CD8-positive, alpha-beta T cell (primary cell): ENCODE measurements at regions of chr19 and their contacts with region 1.

Region 1: DNA sequence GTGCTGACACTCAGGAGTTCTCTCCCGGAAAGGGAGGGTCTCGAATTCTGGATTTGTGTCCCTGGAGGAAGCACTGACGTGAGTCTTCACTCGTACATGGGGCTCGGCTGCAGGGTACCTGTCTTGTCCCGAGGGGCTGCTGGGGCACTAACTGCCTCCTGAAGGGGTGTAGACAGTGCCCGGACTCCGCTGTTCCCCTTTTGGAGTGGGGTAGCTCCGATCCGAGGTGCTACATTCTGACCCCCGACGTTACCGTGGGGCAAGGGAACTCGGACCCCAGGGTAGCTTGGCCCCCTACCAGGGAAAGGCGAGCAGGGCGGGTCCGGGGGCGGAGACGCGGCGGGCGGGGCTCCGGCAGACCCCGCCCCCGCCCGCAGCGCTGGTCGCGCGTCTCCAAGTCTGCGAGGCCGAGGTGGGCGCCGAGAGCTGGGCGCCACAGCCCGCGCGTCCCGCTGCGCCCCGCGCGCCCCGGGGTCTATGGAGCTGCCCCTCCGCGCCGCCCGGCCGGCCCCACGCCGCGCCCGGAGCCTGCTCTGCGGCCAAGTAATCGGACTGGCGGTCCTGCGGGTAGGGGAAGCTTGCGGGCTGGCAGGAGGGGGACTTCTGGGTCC is at the start of gene NPAS1:
- DNase-seq: peak in 1 of 9 experiments; percentile 10
- ATAC-seq: no peak
- H3K4me3 ChIP-seq: no peak within 1 kb of the TSS
- H3K4me3 Mint-ChIP-seq: peak within 1 kb of the TSS; percentile 26
- H3K27ac ChIP-seq: no peak within 1 kb of the TSS
- H3K27ac Mint-ChIP-seq: no peak within 1 kb of the TSS
- H3K4me1 ChIP-seq: peaks cover 26% of the 10 kb centered on the region
- H3K4me1 Mint-ChIP-seq: peaks cover 17% of the 10 kb centered on the region
- H3K27me3 ChIP-seq: peaks cover 26 to 32% of the 10 kb centered on the region in 2 experiments
- H3K27me3 Mint-ChIP-seq: peaks cover 33% of the 10 kb centered on the region
- CTCF ChIP-seq: no peak
- total RNA-seq, gene NPAS1: 1.1 to 1.6 TPM

Region 2: GRCh38 chr19:46600384-46601317 is 418.9 kb before region 1 on chr19:
- CTCF ChIA-PET with region 1: no interaction called
- POLR2A ChIA-PET with region 1: no interaction called
- intact Hi-C with region 1: no loop called
- DNase-seq: peak; percentile 95 to 99 (median 97)
- ATAC-seq: peak; percentile 89
- H3K4me3 ChIP-seq: peak overlapping the region; percentile 88 to 99
- H3K4me3 Mint-ChIP-seq: peak overlapping the region; percentile 96
- H3K27ac ChIP-seq: peak overlapping the region; percentile 100
- H3K27ac Mint-ChIP-seq: peak overlapping the region; percentile 100
- H3K4me1 ChIP-seq: peaks cover 34% of the 10 kb centered on the region
- H3K4me1 Mint-ChIP-seq: peaks cover 38% of the 10 kb centered on the region
- H3K27me3 ChIP-seq: no peaks in the 10 kb centered on the region
- H3K27me3 Mint-ChIP-seq: no peaks in the 10 kb centered on the region
- CTCF ChIP-seq: no peak

Region 3: DNA sequence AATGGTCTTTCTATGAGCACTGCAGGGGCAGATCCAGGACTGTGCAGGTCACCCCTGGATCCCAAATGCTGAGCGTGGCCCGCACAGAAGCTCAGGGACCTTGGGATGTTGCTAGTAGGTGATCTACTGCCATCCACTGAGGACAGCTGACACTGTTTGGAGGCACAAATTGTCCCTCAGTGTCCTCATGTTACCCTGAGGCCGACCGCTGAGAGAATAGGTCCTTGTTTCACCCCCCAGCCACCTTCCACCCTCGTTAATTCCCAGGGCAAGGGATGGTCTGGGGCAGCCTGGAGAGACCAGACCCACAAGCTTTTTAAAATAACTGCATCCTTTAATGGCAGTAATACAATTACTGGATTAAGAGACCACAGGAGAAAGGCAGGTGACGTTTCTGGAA is 44.3 kb after region 1 on chr19:
- CTCF ChIA-PET with region 1: no interaction called
- POLR2A ChIA-PET with region 1: no interaction called
- intact Hi-C with region 1: loop called in 1 of 2 experiments (anchors 5 kb)
- DNase-seq: no peak
- ATAC-seq: no peak
- H3K4me3 ChIP-seq: no peak overlapping the region
- H3K4me3 Mint-ChIP-seq: no peak overlapping the region
- H3K27ac ChIP-seq: no peak overlapping the region
- H3K27ac Mint-ChIP-seq: no peak overlapping the region
- H3K4me1 ChIP-seq: no peaks in the 10 kb centered on the region
- H3K4me1 Mint-ChIP-seq: no peaks in the 10 kb centered on the region
- H3K27me3 ChIP-seq: no peaks in the 10 kb centered on the region
- H3K27me3 Mint-ChIP-seq: no peaks in the 10 kb centered on the region
- CTCF ChIP-seq: no peak